ENCODE measurements at regions of chr20 and their contacts with region 1.

Region 1: DNA sequence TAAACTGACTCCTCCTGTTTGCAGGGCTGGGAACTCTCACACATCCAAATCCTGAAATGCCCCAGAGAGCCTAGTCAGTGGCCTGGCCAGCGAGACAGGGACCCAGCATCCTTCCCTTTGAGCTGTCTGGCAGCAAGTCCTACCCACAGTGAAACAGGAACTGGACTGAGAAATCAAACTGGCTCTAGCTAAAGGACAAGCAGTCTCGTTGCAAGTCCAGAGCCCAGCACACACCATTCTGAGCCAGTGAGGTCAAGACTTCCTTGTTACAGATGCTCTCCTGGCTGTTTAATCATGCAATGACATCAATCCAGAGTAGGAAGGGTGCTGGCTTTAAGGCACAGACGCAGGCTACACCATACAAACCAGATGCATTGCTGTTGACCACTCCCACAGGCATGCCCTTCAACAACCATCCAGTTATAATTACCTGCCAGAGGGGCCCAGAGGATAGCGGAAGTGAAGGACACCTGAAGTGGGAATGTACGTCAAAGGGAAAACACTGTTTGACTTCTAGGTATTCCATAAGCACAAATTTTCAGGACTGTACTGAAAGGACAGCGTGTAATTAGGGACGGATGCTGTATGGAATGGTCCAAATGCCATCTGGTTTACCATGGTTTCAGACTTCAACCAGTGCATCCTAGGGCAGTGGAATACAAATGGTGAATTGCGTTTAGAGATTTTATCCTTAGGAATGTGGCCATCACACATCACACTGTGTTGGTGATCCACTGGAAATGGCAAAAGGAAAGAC is 114.4 kb downstream of the SLC23A2 start:
- DNase-seq: no peak
- H3K4me3 ChIP-seq: no peak overlapping the region
- H3K27ac ChIP-seq: peak overlapping the region in 9 of 59 donors; percentile 6 to 43 (median 16)
- H3K27me3 ChIP-seq: no peaks in the 10 kb centered on the region
- CTCF ChIP-seq: no peak

Region 2: GRCh38 chr20:4813863-4814695 is 72.9 kb before region 1 on chr20:
- intact Hi-C with region 1: loop called (anchors 10 kb)
- DNase-seq: peak in 1 of 10 donors; percentile 33
- H3K4me3 ChIP-seq: peak overlapping the region in 18 of 59 donors; percentile 3 to 47 (median 26)
- H3K27ac ChIP-seq: peak overlapping the region in 58 of 59 donors; percentile 5 to 92 (median 78)
- H3K27me3 ChIP-seq: no peaks in the 10 kb centered on the region
- CTCF ChIP-seq: no peak

Region 3: GRCh38 chr20:4844751-4845465 is 42.0 kb before region 1 on chr20:
- intact Hi-C with region 1: no loop called
- DNase-seq: no peak
- H3K4me3 ChIP-seq: no peak overlapping the region
- H3K27ac ChIP-seq: peak overlapping the region in 1 of 59 donors; percentile 28
- H3K27me3 ChIP-seq: no peaks in the 10 kb centered on the region
- CTCF ChIP-seq: no peak

Region 4: GRCh38 chr20:4937397-4938319 is 50.7 kb after region 1 on chr20:
- intact Hi-C with region 1: loop called in 1 of 2 experiments (anchors 10 kb)
- DNase-seq: no peak
- H3K4me3 ChIP-seq: no peak overlapping the region
- H3K27ac ChIP-seq: peak overlapping the region in 3 of 59 donors; percentile 4 to 26 (median 16)
- H3K27me3 ChIP-seq: no peaks in the 10 kb centered on the region
- CTCF ChIP-seq: no peak

Measured in dorsolateral prefrontal cortex (tissue), 120 donors.